Activated naive CD4-positive, alpha-beta T cell treated with anti-CD3 and anti-CD28 coated beads for 36 hours (primary cell): ENCODE measurements at regions of chr6 and their contacts with region 1.

Region 1: DNA sequence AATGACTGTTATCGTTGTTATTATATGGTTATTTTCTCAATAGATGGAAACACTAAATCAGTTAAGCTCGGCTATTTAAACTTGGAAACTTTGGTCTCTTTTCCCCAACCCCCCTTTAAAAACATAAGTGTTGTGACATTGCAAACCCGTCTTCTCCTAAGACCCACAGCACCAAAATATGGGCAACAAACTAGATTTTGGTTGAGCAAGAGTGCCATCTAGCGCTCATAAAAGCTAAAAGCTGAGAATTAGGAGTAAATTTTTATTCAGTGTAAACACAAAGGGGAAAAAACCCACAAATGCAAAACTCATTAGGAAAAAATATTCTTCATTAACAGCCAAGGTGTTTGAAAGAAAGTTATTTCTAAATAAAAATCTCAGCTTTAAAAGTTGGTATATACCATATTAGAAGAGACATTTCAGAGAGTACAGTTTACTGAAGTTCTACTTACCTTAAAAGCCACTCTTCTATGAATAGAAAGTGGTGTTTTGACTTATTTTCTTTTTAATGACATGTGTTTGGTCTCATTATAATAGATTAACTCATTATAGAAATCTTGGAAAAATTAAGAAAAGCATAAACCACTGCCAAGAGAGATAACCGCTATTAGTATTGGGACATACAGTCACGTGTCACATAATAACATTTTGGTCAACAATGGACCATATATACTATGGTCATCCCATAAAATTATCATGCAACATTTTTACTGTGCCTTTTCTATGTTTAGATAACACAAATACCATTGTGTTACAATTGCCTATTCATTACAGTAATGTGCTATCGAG is 21.1 kb downstream of the SESN1 start:
- DNase-seq: peak; percentile 66
- H3K4me3 Mint-ChIP-seq: peak overlapping the region; percentile 20
- H3K27ac Mint-ChIP-seq: no peak overlapping the region
- H3K4me1 Mint-ChIP-seq: peaks cover 20% of the 10 kb centered on the region
- H3K27me3 Mint-ChIP-seq: no peaks in the 10 kb centered on the region

Region 2: GRCh38 chr6:108541838-108542759 is 531.4 kb before region 1 on chr6:
- CTCF ChIA-PET with region 1: interaction called, 21 read pairs
- intact Hi-C with region 1: loop called (anchors 1 kb)
- DNase-seq: peak; percentile 83
- H3K4me3 Mint-ChIP-seq: peak overlapping the region; percentile 34
- H3K27ac Mint-ChIP-seq: no peak overlapping the region
- H3K4me1 Mint-ChIP-seq: peaks cover 7% of the 10 kb centered on the region
- H3K27me3 Mint-ChIP-seq: peaks cover 8% of the 10 kb centered on the region

Region 3: GRCh38 chr6:108798670-108799353 is 274.7 kb before region 1 on chr6:
- CTCF ChIA-PET with region 1: interaction called, 3 read pairs
- intact Hi-C with region 1: loop called (anchors 5 kb)
- DNase-seq: peak; percentile 73
- H3K4me3 Mint-ChIP-seq: peak overlapping the region; percentile 43
- H3K27ac Mint-ChIP-seq: no peak overlapping the region
- H3K4me1 Mint-ChIP-seq: peaks cover 18% of the 10 kb centered on the region
- H3K27me3 Mint-ChIP-seq: no peaks in the 10 kb centered on the region

Region 4: DNA sequence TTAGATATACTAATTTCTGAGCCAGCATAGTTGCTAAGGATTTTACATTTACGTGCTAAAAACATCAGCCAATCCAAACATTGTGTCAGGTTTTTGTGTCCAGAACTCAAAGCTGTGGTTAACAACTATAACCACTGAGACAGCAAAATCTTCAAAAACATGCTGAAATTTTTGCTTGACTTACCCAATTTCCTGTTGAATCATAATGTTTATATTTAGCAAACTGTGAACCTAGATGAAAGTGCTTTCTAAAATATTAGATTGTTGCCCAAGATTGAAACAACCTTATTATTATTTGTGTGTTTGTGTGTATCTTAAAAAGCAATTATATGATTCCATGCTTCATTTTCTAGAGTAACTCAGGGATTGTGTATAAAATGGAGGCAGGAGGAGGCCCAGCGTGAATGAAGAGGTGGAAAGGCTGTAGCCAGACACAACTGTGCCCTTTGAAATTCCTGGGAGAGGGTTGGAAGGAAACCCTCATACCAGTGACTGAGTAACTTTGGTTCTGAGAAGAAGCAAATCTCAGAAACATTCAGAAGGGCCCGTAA is 177.4 kb before region 1 on chr6:
- CTCF ChIA-PET with region 1: interaction called, 20 read pairs
- intact Hi-C with region 1: no loop called
- DNase-seq: no peak
- H3K4me3 Mint-ChIP-seq: no peak overlapping the region
- H3K27ac Mint-ChIP-seq: no peak overlapping the region
- H3K4me1 Mint-ChIP-seq: peaks cover 12% of the 10 kb centered on the region
- H3K27me3 Mint-ChIP-seq: no peaks in the 10 kb centered on the region

Region 5: DNA sequence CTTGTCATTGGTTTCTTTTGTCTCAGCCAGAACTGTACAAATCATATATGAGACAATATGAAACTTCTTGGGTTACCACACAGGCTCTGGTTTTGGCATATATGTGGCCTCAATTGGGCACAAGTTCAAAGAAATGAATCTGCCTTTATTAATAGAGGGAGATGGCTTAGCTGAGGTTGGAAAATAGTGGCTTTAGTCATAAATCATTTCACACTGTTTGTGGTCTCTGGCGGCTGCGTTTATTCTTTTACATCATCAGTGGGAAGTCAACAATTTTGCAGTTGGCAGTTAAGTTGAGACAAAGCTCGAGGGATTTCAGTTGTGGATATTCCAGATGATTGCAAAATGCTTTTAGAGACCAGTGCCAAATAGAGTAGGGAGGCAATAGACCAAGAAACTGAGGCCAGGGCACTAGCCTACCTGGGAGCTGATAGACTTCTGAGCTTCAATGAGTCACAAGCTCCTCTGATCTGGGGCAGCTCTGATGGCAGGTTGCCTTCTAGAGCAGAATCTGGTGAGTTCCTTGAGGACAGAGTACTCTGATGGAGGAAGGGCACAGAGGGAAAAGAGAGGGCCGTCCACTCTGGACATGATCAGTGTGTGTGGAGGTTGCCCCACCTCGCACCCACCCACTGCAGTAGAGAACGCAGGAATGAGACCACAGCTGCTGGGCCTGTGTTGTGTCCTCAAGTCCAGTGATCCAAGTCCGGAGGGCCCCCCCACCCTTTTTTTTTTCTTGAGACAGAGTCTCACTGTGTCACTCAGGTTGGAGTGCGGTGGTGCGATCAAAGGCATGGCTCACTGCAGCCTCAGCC is 151.8 kb before region 1 on chr6:
- CTCF ChIA-PET with region 1: interaction called, 29 read pairs
- intact Hi-C with region 1: no loop called
- DNase-seq: peak; percentile 43
- H3K4me3 Mint-ChIP-seq: no peak overlapping the region
- H3K27ac Mint-ChIP-seq: no peak overlapping the region
- H3K4me1 Mint-ChIP-seq: peaks cover 27% of the 10 kb centered on the region
- H3K27me3 Mint-ChIP-seq: no peaks in the 10 kb centered on the region

Region 6: GRCh38 chr6:109059571-109060021 is 13.9 kb before region 1 on chr6:
- CTCF ChIA-PET with region 1: interaction called, 13 read pairs
- intact Hi-C with region 1: loop called (anchors 1 kb)
- DNase-seq: peak; percentile 19
- H3K4me3 Mint-ChIP-seq: peak overlapping the region; percentile 35
- H3K27ac Mint-ChIP-seq: peak overlapping the region; percentile 55
- H3K4me1 Mint-ChIP-seq: peaks cover 40% of the 10 kb centered on the region
- H3K27me3 Mint-ChIP-seq: no peaks in the 10 kb centered on the region